ENCODE measurements at regions of chr9 and their contacts with region 1.

Region 1: DNA sequence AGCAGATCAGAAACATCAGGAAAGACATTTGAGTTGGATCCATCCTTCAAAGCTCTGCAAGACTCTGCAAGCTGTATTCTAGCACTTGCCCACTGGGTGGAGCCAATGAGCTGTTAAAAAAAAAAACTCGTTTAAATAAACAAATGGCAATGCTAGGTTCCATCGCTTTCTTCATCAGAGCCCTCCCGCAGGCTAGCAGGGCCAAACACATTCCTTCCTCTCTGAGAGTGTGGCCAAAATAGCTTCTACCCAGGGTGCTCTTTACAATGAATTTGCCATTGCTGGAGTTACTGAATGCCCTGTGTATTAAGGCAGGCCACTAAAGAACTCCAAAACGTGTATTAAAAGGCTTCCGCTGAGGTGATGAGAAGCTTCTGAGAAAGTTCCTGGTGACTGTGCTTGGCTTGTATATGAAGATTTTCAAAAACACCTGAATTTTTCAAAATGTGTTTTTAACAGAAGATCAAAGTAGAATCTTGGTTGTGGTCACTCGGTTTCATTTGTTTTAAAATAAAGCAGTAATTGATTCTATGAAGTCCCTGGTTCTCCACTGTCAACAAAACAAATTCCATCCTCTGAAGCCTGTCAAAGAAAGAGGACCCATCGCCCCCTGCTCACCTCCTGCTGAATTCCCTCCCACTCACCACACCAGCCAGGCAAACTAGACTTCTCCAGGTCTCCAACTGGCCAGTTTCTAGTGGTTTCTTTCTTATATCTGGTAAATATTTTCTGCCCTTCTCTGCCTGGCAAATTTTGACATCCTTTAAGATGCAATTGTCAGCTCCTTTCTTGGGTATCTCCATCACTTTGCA is 36.5 kb upstream of the EQTN start:
- DNase-seq: peak; percentile 91

Region 2: DNA sequence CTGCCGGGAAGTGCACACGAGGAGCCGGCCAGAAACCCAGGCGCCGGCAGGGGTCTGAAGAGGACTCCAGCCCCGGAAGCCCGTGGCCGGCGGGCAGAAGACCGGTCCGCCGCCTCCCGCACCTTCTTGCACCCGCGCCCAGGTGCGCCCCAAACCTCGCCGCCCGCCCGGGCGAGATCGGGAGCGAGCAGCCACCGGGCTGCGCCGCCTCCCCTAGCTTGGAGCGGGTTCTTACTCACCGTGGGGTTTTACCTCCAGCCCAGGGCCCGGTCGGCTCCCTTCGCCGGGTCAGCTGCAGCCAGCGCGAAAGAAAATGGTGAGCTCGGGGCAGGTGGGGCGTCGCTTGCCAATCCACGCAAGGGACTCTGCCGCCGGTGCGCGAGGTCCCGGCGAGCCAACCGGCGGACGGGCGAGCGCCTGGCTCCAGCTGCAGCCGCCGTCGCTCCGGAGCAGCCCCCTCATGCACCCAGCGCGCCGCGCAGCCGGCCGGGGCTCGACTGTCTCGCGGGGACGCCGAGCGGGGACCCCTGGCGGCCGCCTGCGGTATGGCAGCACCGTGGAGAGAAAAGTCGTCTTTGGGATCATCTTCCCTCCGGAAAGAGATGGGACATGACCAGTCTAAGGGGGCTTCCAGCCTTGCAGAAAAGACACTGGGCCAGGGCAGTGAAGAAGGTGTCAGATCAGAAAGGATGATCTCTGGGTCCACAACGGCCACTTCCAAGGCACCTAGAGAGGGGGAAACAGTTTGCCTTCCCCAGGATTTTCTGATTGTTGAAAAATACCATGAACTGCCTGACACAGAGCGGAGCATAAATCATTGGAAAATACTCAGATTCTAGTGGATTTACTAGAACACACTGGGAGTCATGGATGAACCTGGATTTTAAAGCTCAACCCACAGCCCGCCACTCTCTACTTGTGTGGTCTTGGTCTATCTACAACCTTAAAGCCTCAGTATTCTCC is 196.2 kb after region 1 on chr9 and contains the start of gene MOB3B:
- in situ Hi-C with region 1: loop called (anchors 10 kb)
- DNase-seq: peak; percentile 83

Measured in KBM-7 (cell line).